ENCODE measurements at regions of chr5 and their contacts with region 1.

Region 1: DNA sequence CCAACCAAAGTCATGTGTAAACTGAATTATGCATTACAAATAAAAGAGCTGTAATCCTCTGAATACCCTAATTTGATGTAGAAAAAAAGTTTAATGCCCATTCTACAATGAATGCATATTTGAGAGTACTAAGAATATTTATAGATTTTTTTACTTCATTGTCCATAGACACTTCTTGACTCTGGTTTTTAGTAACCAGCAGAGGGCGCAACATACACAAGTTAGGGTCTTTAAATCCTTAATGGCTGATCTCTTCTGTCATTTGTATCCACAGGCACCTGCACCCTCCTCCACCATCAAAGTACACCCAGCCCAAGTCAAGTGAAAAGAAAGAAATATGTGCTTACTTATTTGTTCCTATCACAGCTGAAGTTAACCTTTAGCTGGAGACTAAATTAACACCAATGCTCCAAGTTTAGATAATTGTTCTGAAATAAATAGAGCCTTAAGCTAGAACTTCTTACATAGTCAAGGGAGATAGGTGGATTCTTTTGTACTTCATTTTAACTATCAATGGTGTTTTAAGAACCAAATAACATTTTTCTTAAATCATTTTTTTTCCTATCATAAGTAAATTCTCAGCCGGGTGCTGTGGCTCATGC is 524.2 kb upstream of the DAB2 start:
- DNase-seq: peak; percentile 33
- H3K4me3 Mint-ChIP-seq: no peak overlapping the region
- H3K27ac Mint-ChIP-seq: no peak overlapping the region
- H3K4me1 Mint-ChIP-seq: peaks cover 3% of the 10 kb centered on the region
- H3K27me3 Mint-ChIP-seq: no peaks in the 10 kb centered on the region

Region 2: DNA sequence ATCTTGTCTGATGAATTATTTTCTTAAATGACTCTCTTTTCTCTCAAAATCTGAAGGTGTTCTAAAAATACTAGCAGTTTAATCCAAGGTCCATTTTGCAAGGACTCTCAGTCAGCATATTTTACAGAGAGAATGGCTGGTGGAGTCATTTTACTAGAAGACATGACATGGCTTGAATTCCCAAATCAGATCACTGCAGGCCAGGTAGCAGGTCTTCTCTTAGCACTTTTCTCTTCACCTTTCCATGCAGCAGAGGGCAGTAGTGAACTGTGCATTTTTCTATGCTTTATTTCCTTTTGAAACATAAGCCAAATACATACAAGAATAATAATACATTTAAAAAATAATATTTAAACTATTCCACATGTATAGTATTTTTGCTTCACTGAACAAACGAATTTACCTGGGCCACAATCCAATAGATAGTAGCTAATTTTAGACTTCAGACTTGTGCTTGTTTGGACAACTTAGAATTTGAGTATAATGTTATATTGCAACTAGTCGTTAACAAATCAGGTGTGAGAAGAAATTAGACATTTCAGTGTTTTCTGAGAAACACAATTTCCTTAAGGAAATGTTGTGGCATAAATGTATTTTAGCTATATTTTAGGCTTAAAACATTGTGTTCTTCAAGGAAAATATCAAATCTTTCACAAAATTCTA is 234.8 kb before region 1 on chr5:
- intact Hi-C with region 1: loop called (anchors 10 kb)
- DNase-seq: no peak
- H3K4me3 Mint-ChIP-seq: no peak overlapping the region
- H3K27ac Mint-ChIP-seq: no peak overlapping the region
- H3K4me1 Mint-ChIP-seq: no peaks in the 10 kb centered on the region
- H3K27me3 Mint-ChIP-seq: peaks cover 10% of the 10 kb centered on the region

Region 3: DNA sequence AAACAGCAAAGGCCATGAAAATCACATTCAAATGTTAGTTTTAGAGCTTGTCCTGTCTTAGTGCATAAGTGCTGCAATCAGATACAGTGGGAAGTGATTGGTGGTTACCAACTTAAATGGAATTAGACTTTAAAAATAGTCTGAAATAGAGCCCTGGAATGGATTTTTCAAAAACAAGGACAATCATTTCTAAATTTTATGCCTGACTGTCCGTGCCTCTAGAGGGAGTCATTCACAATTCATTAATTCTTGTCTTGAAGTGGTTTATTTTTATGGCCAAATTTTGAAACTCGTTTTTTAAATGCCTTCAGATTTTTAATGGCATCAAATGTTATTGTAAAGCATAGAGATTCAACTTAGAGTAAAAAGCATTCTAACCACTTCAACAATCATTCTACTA is 37.6 kb after region 1 on chr5:
- intact Hi-C with region 1: no loop called
- DNase-seq: no peak
- H3K4me3 Mint-ChIP-seq: no peak overlapping the region
- H3K27ac Mint-ChIP-seq: no peak overlapping the region
- H3K4me1 Mint-ChIP-seq: no peaks in the 10 kb centered on the region
- H3K27me3 Mint-ChIP-seq: peaks cover 8% of the 10 kb centered on the region

Region 4: GRCh38 chr5:40437452-40437861 is 488.5 kb after region 1 on chr5:
- intact Hi-C with region 1: loop called (anchors 1 kb)
- DNase-seq: no peak
- H3K4me3 Mint-ChIP-seq: no peak overlapping the region
- H3K27ac Mint-ChIP-seq: peak overlapping the region; percentile 77
- H3K4me1 Mint-ChIP-seq: peaks cover 74% of the 10 kb centered on the region
- H3K27me3 Mint-ChIP-seq: no peaks in the 10 kb centered on the region

Region 5: GRCh38 chr5:40486437-40487275 is 537.7 kb after region 1 on chr5:
- intact Hi-C with region 1: loop called (anchors 5 kb)
- DNase-seq: peak; percentile 64
- H3K4me3 Mint-ChIP-seq: peak overlapping the region; percentile 19
- H3K27ac Mint-ChIP-seq: peak overlapping the region; percentile 75
- H3K4me1 Mint-ChIP-seq: peaks cover 78% of the 10 kb centered on the region
- H3K27me3 Mint-ChIP-seq: no peaks in the 10 kb centered on the region

Region 6: GRCh38 chr5:40736103-40736875 is 787.3 kb after region 1 on chr5:
- intact Hi-C with region 1: loop called (anchors 1 kb)
- DNase-seq: no peak
- H3K4me3 Mint-ChIP-seq: no peak overlapping the region
- H3K27ac Mint-ChIP-seq: peak overlapping the region; percentile 17
- H3K4me1 Mint-ChIP-seq: peaks cover 28% of the 10 kb centered on the region
- H3K27me3 Mint-ChIP-seq: no peaks in the 10 kb centered on the region

Region 7: DNA sequence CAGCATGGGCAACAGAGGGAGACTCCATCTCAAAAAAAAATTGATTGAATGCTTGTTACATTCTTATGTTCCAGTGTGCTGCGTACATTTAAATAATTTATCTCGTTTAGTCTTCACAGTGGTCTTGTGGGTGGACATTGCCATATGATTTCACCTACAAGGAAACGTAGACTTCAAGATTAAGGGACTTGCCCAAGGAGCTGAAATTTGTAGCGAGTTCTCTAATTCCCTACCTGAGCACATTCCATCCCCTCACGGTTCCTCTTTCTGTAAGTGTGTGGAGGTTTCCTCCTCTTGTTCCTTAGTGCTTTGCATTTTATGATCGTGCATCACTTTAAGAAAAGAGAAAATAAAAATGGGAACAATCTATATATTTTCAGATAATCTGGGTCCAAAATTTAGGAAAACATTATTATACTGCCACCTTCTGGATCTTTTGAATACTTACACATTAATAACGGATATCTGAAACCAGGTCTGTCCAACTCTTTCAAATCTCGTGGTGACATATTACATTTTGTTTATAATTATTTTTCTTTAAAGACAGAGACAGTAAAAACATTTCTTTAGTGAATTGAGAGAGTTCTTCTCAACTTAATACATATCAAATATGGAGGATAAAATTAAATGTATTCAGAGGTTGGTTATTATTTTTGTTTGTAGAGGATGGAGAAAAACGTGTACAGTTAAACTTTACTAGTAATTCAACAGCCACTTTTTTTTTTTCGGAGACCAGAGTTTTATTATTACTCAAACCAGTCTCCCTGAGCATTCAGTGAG is 930.4 kb after region 1 on chr5:
- intact Hi-C with region 1: loop called (anchors 10 kb)
- DNase-seq: no peak
- H3K4me3 Mint-ChIP-seq: no peak overlapping the region
- H3K27ac Mint-ChIP-seq: no peak overlapping the region
- H3K4me1 Mint-ChIP-seq: peaks cover 4% of the 10 kb centered on the region
- H3K27me3 Mint-ChIP-seq: peaks cover 12% of the 10 kb centered on the region